Pancreas (tissue), 10 donors: ENCODE measurements at regions of chr1 and their contacts with region 1.

Region 1: GRCh38 chr1:119675349-119676345 is 27.6 kb upstream of the ZNF697 start:
- DNase-seq: peak in 5 of 6 donors; percentile 63 to 83 (median 72)
- ATAC-seq: peak; percentile 67 to 88 (median 79)
- H3K4me3 ChIP-seq: peak overlapping the region in 2 of 4 donors; percentile 26 to 36
- H3K27ac ChIP-seq: peak overlapping the region; percentile 20 to 73 (median 55)
- H3K4me1 ChIP-seq: peaks cover 0 to 11% (median 7%) of the 10 kb centered on the region in 3 donors
- H3K27me3 ChIP-seq: no peaks in the 10 kb centered on the region
- CTCF ChIP-seq: peak; percentile 64 to 88 (median 82)

Region 2: DNA sequence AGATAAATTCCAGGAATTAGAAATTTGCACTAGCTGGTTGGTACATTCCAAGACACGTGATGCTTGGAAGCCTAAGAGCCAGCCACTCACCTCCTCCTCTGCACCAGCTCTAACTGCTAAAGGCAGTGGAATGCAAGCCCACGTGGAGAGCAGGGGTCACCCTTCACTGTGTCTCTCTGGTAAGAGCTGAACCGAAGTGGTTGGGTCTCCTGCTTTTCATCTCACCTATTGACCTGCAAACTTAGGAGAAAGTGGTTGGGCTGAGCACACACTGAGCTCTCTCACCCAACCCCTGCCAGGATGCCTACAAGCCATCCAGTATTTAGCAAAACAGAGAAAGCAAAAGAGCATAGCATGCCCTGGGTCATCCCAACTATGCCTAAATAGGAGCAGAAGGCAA is 287.8 kb before region 1 on chr1:
- intact Hi-C with region 1: no loop called
- DNase-seq: no peak
- ATAC-seq: no peak
- H3K4me3 ChIP-seq: no peak overlapping the region
- H3K27ac ChIP-seq: no peak overlapping the region
- H3K4me1 ChIP-seq: peaks cover 0 to 4% (median 0%) of the 10 kb centered on the region in 3 donors
- H3K27me3 ChIP-seq: no peaks in the 10 kb centered on the region
- CTCF ChIP-seq: no peak

Region 3: GRCh38 chr1:119549719-119550132 is 125.9 kb before region 1 on chr1:
- intact Hi-C with region 1: loop called in 1 of 3 experiments (anchors 10 kb)
- DNase-seq: peak in 4 of 6 donors; percentile 51 to 77 (median 64)
- ATAC-seq: peak; percentile 34 to 80 (median 74)
- H3K4me3 ChIP-seq: no peak overlapping the region
- H3K27ac ChIP-seq: no peak overlapping the region
- H3K4me1 ChIP-seq: peaks cover 21 to 33% (median 25%) of the 10 kb centered on the region in 3 donors
- H3K27me3 ChIP-seq: no peaks in the 10 kb centered on the region
- CTCF ChIP-seq: peak in 3 of 4 donors; percentile 35 to 42 (median 38)